ENCODE measurements at regions of chr1 and their contacts with region 1.

Region 1: DNA sequence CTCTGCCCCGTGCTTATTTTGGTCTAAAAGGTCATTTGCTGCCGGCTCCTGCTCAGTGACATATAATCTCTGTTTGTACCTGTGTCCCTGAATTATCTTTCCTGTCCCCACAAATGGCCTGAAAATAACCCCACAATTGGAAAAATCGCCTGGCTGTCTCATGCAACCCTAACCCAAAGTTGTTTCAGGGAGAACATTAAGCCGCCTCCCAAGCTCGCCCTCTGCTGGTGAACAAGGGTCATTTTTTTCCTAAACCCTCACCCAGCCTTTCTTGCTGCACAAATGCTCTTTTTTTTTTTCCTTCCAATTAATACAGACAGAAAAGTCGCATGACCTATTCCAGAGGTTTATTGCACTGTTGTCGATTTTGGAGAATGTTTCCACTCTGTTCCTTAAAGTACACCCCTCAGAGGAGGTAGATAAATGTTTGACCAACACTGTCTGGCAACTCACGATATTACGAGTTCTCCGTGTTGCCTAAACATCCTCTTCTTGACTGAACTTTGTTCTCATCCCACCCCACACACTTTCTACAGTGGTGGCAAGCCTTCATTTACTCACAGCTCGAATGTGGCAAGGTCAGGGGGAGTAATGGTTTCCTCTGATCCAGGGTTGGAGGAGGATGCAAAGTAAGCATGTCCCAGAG is 148.7 kb downstream of the ZZZ3 start:
- DNase-seq: peak; percentile 60 to 65 (median 64)
- H3K4me3 ChIP-seq: no peak overlapping the region
- H3K4me3 Mint-ChIP-seq: peak overlapping the region in 5 of 8 donors; percentile 17 to 65 (median 32)
- H3K27ac ChIP-seq: no peak overlapping the region
- H3K27ac Mint-ChIP-seq: peak overlapping the region in 3 of 7 donors; percentile 32 to 83 (median 39)
- H3K4me1 ChIP-seq: peaks cover 3% of the 10 kb centered on the region
- H3K4me1 Mint-ChIP-seq: peaks cover 4 to 8% (median 5%) of the 10 kb centered on the region in 4 donors
- H3K27me3 ChIP-seq: no peaks in the 10 kb centered on the region
- H3K27me3 Mint-ChIP-seq: no peaks in the 10 kb centered on the region

Region 2: GRCh38 chr1:77143529-77144121 is 390.2 kb before region 1 on chr1:
- CTCF ChIA-PET with region 1: interaction called, 35 read pairs
- POLR2A ChIA-PET with region 1: no interaction called
- intact Hi-C with region 1: loop called (anchors 1 kb)
- DNase-seq: peak in 3 of 5 donors; percentile 7 to 16 (median 8)
- H3K4me3 ChIP-seq: no peak overlapping the region
- H3K4me3 Mint-ChIP-seq: no peak overlapping the region
- H3K27ac ChIP-seq: no peak overlapping the region
- H3K27ac Mint-ChIP-seq: no peak overlapping the region
- H3K4me1 ChIP-seq: peaks cover 4% of the 10 kb centered on the region
- H3K4me1 Mint-ChIP-seq: peaks cover 3 to 6% (median 4%) of the 10 kb centered on the region in 4 donors
- H3K27me3 ChIP-seq: no peaks in the 10 kb centered on the region
- H3K27me3 Mint-ChIP-seq: no peaks in the 10 kb centered on the region

Region 3: GRCh38 chr1:77219166-77219887 is 314.5 kb before region 1 on chr1 and contains the start of gene PIGK:
- CTCF ChIA-PET with region 1: no interaction called
- POLR2A ChIA-PET with region 1: no interaction called
- intact Hi-C with region 1: loop called (anchors 1 kb)
- DNase-seq: peak; percentile 84 to 87 (median 86)
- H3K4me3 ChIP-seq: peak within 1 kb of the TSS; percentile 90 to 99
- H3K4me3 Mint-ChIP-seq: peak within 1 kb of the TSS; percentile 93 to 99 (median 96)
- H3K27ac ChIP-seq: peak within 1 kb of the TSS; percentile 74
- H3K27ac Mint-ChIP-seq: peak within 1 kb of the TSS; percentile 93 to 97 (median 96)
- H3K4me1 ChIP-seq: peaks cover 33% of the 10 kb centered on the region
- H3K4me1 Mint-ChIP-seq: peaks cover 28 to 64% (median 50%) of the 10 kb centered on the region in 4 donors
- H3K27me3 ChIP-seq: no peaks in the 10 kb centered on the region
- H3K27me3 Mint-ChIP-seq: no peaks in the 10 kb centered on the region
- total RNA-seq, gene PIGK: 26.4 to 28.2 TPM

Region 4: DNA sequence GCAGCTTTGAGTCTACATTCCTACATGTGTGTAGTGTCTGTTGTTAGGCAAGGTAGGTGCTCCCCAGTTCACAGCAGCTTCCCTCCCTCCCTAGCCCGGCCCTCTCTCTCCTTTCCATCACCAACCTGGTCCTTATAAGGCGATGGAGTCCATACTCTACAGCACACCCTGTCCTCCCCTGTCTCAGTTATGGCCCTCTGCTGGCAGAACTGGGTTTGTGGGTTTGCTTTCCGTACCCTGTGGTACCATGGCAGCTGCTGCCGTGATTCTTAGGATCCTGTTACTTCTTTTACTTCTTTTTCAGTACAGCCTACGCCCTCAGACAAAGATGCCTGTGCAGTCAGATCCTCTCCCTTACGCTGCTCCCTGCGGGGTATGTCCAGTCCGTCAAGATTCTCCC is 220.3 kb before region 1 on chr1:
- CTCF ChIA-PET with region 1: interaction called, 13 read pairs
- POLR2A ChIA-PET with region 1: no interaction called
- intact Hi-C with region 1: loop called (anchors 2 kb)
- DNase-seq: peak; percentile 12 to 25 (median 24)
- H3K4me3 ChIP-seq: no peak overlapping the region
- H3K4me3 Mint-ChIP-seq: peak overlapping the region in 1 of 8 donors; percentile 26
- H3K27ac ChIP-seq: no peak overlapping the region
- H3K27ac Mint-ChIP-seq: peak overlapping the region in 1 of 7 donors; percentile 37
- H3K4me1 ChIP-seq: peaks cover 17% of the 10 kb centered on the region
- H3K4me1 Mint-ChIP-seq: peaks cover 18 to 34% (median 26%) of the 10 kb centered on the region in 4 donors
- H3K27me3 ChIP-seq: no peaks in the 10 kb centered on the region
- H3K27me3 Mint-ChIP-seq: peaks cover 1 to 3% of the 10 kb centered on the region in 2 donors

Region 5: DNA sequence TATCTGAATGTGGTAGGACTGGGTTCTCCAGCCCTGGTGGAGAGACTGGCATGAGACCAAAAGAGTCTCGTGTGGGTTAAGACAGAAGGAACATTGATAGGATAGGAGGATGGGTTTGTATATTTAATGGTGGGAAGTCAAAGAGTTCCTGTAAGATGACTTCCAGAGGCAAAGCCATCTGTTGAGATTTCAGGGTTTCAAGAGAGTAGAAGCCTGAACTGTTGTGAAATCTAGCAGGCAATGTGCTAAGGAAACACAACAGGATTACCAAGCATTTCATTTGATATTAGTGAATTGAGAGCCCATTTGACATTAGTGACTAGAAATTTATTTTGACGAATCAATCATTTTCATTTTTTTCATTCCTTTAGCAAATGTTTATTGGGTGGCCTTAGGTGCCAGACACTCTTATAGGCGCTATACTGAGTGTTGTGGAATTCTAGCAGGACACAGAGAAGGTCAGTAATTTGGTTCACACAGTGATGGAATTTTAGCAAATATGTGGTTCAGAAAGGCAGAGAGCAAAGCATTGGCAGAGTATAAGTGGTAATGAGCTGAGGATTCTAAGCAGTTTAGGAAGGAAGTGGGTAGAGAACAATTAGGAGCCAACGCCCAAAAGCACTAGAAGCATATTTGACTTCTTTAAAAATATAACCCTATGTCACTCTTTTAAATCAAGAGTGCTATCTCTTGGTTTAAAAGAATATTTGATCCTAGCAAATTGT is 102.7 kb before region 1 on chr1:
- CTCF ChIA-PET with region 1: interaction called, 3 read pairs
- POLR2A ChIA-PET with region 1: no interaction called
- intact Hi-C with region 1: loop called (anchors 5 kb)
- DNase-seq: peak in 4 of 5 donors; percentile 50 to 68 (median 64)
- H3K4me3 ChIP-seq: peak overlapping the region in 1 of 2 donors; percentile 21
- H3K4me3 Mint-ChIP-seq: no peak overlapping the region
- H3K27ac ChIP-seq: peak overlapping the region; percentile 44
- H3K27ac Mint-ChIP-seq: no peak overlapping the region
- H3K4me1 ChIP-seq: peaks cover 59% of the 10 kb centered on the region
- H3K4me1 Mint-ChIP-seq: peaks cover 17 to 19% (median 17%) of the 10 kb centered on the region in 4 donors
- H3K27me3 ChIP-seq: no peaks in the 10 kb centered on the region
- H3K27me3 Mint-ChIP-seq: no peaks in the 10 kb centered on the region

Region 6: DNA sequence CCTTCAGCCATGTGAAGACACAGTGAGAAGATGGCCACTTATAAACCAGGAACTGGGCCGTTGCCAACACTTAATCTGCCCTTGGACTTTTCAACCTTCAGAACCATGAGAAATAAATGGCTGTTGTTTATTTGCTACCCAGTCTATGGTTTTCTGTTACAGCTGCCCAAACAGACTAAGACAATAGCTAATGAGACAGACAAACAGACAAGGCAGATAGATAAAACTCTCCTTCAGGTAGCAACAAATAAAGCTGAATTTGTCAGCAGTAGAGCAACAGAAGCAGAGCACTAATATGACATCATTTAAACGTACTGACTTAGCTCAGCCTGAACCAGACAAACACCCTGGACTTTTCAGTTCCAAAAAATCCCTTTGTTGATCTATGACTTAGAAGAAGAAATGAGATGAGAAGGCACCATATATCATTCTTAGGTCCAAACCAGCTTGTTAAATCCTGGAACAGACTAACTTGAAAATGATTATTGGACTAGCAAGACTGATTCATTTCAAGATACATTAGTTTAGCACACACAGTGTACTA is 121.7 kb after region 1 on chr1:
- CTCF ChIA-PET with region 1: no interaction called
- POLR2A ChIA-PET with region 1: no interaction called
- intact Hi-C with region 1: no loop called
- DNase-seq: no peak
- H3K4me3 ChIP-seq: no peak overlapping the region
- H3K4me3 Mint-ChIP-seq: no peak overlapping the region
- H3K27ac ChIP-seq: no peak overlapping the region
- H3K27ac Mint-ChIP-seq: peak overlapping the region in 4 of 7 donors; percentile 18 to 74 (median 44)
- H3K4me1 ChIP-seq: peaks cover 17% of the 10 kb centered on the region
- H3K4me1 Mint-ChIP-seq: peaks cover 27 to 50% (median 38%) of the 10 kb centered on the region in 4 donors
- H3K27me3 ChIP-seq: no peaks in the 10 kb centered on the region
- H3K27me3 Mint-ChIP-seq: no peaks in the 10 kb centered on the region

Region 7: GRCh38 chr1:77742011-77742555 is 208.3 kb after region 1 on chr1:
- CTCF ChIA-PET with region 1: no interaction called
- POLR2A ChIA-PET with region 1: no interaction called
- intact Hi-C with region 1: no loop called
- DNase-seq: no peak
- H3K4me3 ChIP-seq: no peak overlapping the region
- H3K4me3 Mint-ChIP-seq: no peak overlapping the region
- H3K27ac ChIP-seq: no peak overlapping the region
- H3K27ac Mint-ChIP-seq: peak overlapping the region in 2 of 7 donors; percentile 7 to 52
- H3K4me1 ChIP-seq: peaks cover under 1% of the 10 kb centered on the region
- H3K4me1 Mint-ChIP-seq: peaks cover 20 to 44% (median 31%) of the 10 kb centered on the region in 4 donors
- H3K27me3 ChIP-seq: no peaks in the 10 kb centered on the region
- H3K27me3 Mint-ChIP-seq: no peaks in the 10 kb centered on the region